Right ventricle myocardium inferior (tissue), 1 donor: ENCODE measurements at regions of chr6 and their contacts with region 1.

Region 1: GRCh38 chr6:4135665-4136353 is 434 bp upstream of the ECI2 start:
- DNase-seq: peak; percentile 98
- ATAC-seq: peak; percentile 97

Region 2: GRCh38 chr6:3542032-3542640 is 593.7 kb before region 1 on chr6:
- intact Hi-C with region 1: no loop called
- DNase-seq: no peak
- ATAC-seq: no peak

Region 3: DNA sequence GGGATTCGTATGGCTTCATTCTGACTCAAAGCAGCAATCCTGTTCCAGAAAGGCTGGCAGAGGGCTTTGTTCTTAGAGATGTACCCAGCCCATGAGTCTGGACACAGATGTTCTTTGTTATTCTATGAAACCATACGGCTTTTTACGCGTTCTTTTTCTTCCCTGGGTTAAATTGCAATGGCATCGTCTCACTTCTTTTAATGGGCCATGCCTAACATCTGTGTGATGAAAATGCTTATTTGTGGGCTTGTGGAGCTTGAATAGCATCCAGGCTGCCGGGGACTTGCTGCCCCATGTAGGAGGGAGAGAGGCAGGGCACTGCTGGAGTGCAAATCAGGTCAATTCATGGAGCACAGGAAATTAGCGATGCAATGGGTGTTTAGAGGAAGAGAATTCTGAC is 267.3 kb before region 1 on chr6:
- intact Hi-C with region 1: no loop called
- DNase-seq: no peak
- ATAC-seq: no peak

Region 4: GRCh38 chr6:4021133-4021853 is 114.5 kb before region 1 on chr6:
- intact Hi-C with region 1: loop called (anchors 2 kb)
- DNase-seq: peak; percentile 98
- ATAC-seq: peak; percentile 93

Region 5: GRCh38 chr6:4093288-4093687 is 42.5 kb before region 1 on chr6:
- intact Hi-C with region 1: no loop called
- DNase-seq: no peak
- ATAC-seq: no peak